ENCODE measurements at regions of chr22 and their contacts with region 1.

Region 1: DNA sequence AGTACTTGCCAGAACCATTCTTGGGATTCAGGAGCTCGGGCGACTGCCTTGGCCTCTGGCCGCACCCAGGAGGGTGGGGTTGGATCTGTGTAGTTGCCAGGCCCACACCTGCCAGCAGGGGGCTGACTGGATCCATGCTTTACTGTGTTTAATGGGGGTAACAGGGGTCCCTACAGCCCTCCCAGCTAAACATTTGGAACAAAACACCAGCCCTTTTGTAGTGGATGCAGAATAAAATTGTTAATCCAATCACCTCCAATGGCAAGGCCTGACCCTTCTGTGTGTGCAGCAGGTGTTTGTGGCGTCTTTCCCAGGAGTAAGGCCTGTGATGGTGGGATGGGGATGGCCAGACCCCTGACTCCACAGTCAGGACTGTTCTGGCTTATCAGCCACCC is 22.5 kb downstream of the SUN2 start:
- DNase-seq: peak; percentile 65
- H3K4me3 Mint-ChIP-seq: no peak overlapping the region
- H3K27ac Mint-ChIP-seq: peak overlapping the region; percentile 59
- H3K4me1 Mint-ChIP-seq: peaks cover 30% of the 10 kb centered on the region
- H3K27me3 Mint-ChIP-seq: no peaks in the 10 kb centered on the region

Region 2: GRCh38 chr22:38513063-38513462 is 220.3 kb before region 1 on chr22:
- CTCF ChIA-PET with region 1: no interaction called
- intact Hi-C with region 1: no loop called
- DNase-seq: peak; percentile 63
- H3K4me3 Mint-ChIP-seq: no peak overlapping the region
- H3K27ac Mint-ChIP-seq: no peak overlapping the region
- H3K4me1 Mint-ChIP-seq: no peaks in the 10 kb centered on the region
- H3K27me3 Mint-ChIP-seq: no peaks in the 10 kb centered on the region

Region 3: GRCh38 chr22:38623351-38623750 is 110.0 kb before region 1 on chr22:
- CTCF ChIA-PET with region 1: no interaction called
- intact Hi-C with region 1: no loop called
- DNase-seq: no peak
- H3K4me3 Mint-ChIP-seq: no peak overlapping the region
- H3K27ac Mint-ChIP-seq: no peak overlapping the region
- H3K4me1 Mint-ChIP-seq: no peaks in the 10 kb centered on the region
- H3K27me3 Mint-ChIP-seq: no peaks in the 10 kb centered on the region

Region 4: GRCh38 chr22:38744981-38745380 is 11.7 kb after region 1 on chr22:
- CTCF ChIA-PET with region 1: interaction called, 14 read pairs
- intact Hi-C with region 1: no loop called
- DNase-seq: no peak
- H3K4me3 Mint-ChIP-seq: no peak overlapping the region
- H3K27ac Mint-ChIP-seq: peak overlapping the region; percentile 41
- H3K4me1 Mint-ChIP-seq: peaks cover 12% of the 10 kb centered on the region
- H3K27me3 Mint-ChIP-seq: no peaks in the 10 kb centered on the region

Region 5: DNA sequence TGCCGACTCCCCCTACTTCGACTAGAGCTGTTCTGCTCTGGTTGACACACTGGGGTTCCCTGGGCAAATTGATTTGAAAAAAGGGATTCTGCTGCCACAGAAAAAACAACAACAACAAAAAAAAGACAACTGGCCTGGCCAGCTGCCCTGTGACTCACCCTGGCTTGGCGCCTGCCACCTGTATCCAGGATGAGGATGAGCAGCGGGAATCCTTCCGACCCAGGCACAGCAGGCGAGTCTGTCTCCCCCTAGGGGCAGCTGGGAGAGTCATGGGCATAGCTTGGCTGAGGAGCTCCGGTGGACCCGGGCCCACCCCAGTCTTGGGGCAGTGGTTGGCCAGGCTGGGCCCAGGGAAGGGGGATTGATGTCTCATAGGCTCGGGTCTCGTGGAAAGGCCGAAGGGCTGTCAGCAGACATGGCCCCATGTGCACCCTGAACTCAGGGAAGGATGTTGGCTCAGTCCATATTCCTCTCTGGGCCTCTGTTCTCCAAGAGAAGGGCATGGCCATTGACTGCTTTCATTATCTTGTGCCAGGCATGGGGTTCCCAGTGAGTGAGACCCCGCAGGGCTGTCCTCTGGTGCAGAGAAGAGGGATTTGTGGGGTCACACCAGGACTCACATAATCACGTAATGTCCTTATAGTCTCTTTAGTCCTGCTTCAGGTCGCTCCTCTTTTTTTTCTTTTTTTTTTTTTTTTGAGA is 32.9 kb after region 1 on chr22:
- CTCF ChIA-PET with region 1: interaction called, 5 read pairs
- intact Hi-C with region 1: loop called (anchors 1 kb)
- DNase-seq: peak; percentile 58
- H3K4me3 Mint-ChIP-seq: no peak overlapping the region
- H3K27ac Mint-ChIP-seq: no peak overlapping the region
- H3K4me1 Mint-ChIP-seq: peaks cover 5% of the 10 kb centered on the region
- H3K27me3 Mint-ChIP-seq: no peaks in the 10 kb centered on the region

Region 6: GRCh38 chr22:38811241-38811640 is 77.9 kb after region 1 on chr22:
- CTCF ChIA-PET with region 1: no interaction called
- intact Hi-C with region 1: no loop called
- DNase-seq: no peak
- H3K4me3 Mint-ChIP-seq: no peak overlapping the region
- H3K27ac Mint-ChIP-seq: no peak overlapping the region
- H3K4me1 Mint-ChIP-seq: no peaks in the 10 kb centered on the region
- H3K27me3 Mint-ChIP-seq: no peaks in the 10 kb centered on the region

Region 7: GRCh38 chr22:38824585-38824984 is 91.3 kb after region 1 on chr22:
- CTCF ChIA-PET with region 1: no interaction called
- intact Hi-C with region 1: no loop called
- DNase-seq: peak; percentile 72
- H3K4me3 Mint-ChIP-seq: no peak overlapping the region
- H3K27ac Mint-ChIP-seq: no peak overlapping the region
- H3K4me1 Mint-ChIP-seq: no peaks in the 10 kb centered on the region
- H3K27me3 Mint-ChIP-seq: no peaks in the 10 kb centered on the region